Activated CD4-positive, alpha-beta memory T cell treated with anti-CD3 and anti-CD28 coated beads for 36 hours (primary cell): ENCODE measurements at regions of chr6 and their contacts with region 1.

Region 1: GRCh38 chr6:16657768-16658167 is 103.5 kb downstream of the ATXN1 start:
- DNase-seq: no peak
- H3K4me3 Mint-ChIP-seq: peak overlapping the region; percentile 60
- H3K27ac Mint-ChIP-seq: peak overlapping the region; percentile 87
- H3K4me1 Mint-ChIP-seq: peaks cover 80% of the 10 kb centered on the region
- H3K27me3 Mint-ChIP-seq: no peaks in the 10 kb centered on the region

Region 2: GRCh38 chr6:16420715-16421461 is 236.9 kb before region 1 on chr6:
- CTCF ChIA-PET with region 1: no interaction called
- POLR2A ChIA-PET with region 1: no interaction called
- intact Hi-C with region 1: loop called (anchors 2 kb)
- DNase-seq: peak; percentile 74
- H3K4me3 Mint-ChIP-seq: peak overlapping the region; percentile 62
- H3K27ac Mint-ChIP-seq: peak overlapping the region; percentile 96
- H3K4me1 Mint-ChIP-seq: peaks cover 69% of the 10 kb centered on the region
- H3K27me3 Mint-ChIP-seq: no peaks in the 10 kb centered on the region

Region 3: DNA sequence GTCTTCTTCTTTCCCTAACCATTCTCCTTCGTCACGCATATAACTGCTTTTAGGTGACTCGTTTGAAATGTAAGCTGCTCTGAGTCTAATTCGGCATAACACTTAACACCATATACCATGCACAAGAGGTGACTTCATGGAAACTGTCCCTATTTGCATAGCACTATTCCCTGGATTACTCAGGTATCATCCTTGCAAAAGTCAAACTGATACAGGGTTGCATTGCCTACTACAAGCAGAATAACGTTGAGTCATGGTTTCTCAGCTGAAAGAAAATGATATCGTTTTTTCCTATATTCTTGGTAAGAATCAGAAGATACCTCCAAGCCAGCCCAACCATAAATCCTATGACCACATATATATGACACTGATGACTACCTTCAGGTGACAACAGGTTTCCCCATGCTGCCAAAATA is 124.0 kb before region 1 on chr6:
- CTCF ChIA-PET with region 1: no interaction called
- POLR2A ChIA-PET with region 1: no interaction called
- intact Hi-C with region 1: loop called (anchors 1 kb)
- DNase-seq: no peak
- H3K4me3 Mint-ChIP-seq: no peak overlapping the region
- H3K27ac Mint-ChIP-seq: peak overlapping the region; percentile 77
- H3K4me1 Mint-ChIP-seq: peaks cover 43% of the 10 kb centered on the region
- H3K27me3 Mint-ChIP-seq: no peaks in the 10 kb centered on the region

Region 4: DNA sequence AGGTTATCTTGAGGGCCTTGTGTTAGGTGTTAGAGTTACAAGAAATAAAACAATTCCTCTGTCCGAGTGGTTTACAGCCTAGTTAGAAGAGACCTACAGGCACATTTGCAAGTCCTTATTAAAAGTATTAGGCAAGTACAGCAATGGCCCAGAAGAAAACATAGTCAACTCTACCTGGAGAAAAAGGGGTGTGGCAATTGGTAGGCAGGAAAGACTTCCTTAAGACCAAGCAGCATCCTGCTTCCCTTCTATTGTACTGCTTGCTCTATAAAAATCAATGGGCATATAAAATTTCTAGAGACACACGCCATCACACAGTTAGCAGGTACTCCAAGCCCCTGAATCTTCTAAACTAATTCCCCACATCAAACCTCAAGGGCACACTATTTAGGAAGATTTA is 82.1 kb before region 1 on chr6:
- CTCF ChIA-PET with region 1: no interaction called
- POLR2A ChIA-PET with region 1: no interaction called
- intact Hi-C with region 1: no loop called
- DNase-seq: no peak
- H3K4me3 Mint-ChIP-seq: no peak overlapping the region
- H3K27ac Mint-ChIP-seq: no peak overlapping the region
- H3K4me1 Mint-ChIP-seq: peaks cover 15% of the 10 kb centered on the region
- H3K27me3 Mint-ChIP-seq: no peaks in the 10 kb centered on the region

Region 5: GRCh38 chr6:16670183-16670582 is 12.4 kb after region 1 on chr6:
- CTCF ChIA-PET with region 1: interaction called, 3 read pairs
- POLR2A ChIA-PET with region 1: interaction called, 9 read pairs
- intact Hi-C with region 1: loop called (anchors 1 kb)
- DNase-seq: no peak
- H3K4me3 Mint-ChIP-seq: peak overlapping the region; percentile 33
- H3K27ac Mint-ChIP-seq: peak overlapping the region; percentile 87
- H3K4me1 Mint-ChIP-seq: peaks cover 81% of the 10 kb centered on the region
- H3K27me3 Mint-ChIP-seq: no peaks in the 10 kb centered on the region

Region 6: GRCh38 chr6:16698997-16699868 is 41.5 kb after region 1 on chr6:
- CTCF ChIA-PET with region 1: interaction called, 11 read pairs
- POLR2A ChIA-PET with region 1: interaction called, 37 read pairs
- intact Hi-C with region 1: loop called (anchors 1 kb)
- DNase-seq: peak; percentile 53
- H3K4me3 Mint-ChIP-seq: peak overlapping the region; percentile 78
- H3K27ac Mint-ChIP-seq: peak overlapping the region; percentile 89
- H3K4me1 Mint-ChIP-seq: peaks cover 75% of the 10 kb centered on the region
- H3K27me3 Mint-ChIP-seq: no peaks in the 10 kb centered on the region

Region 7: DNA sequence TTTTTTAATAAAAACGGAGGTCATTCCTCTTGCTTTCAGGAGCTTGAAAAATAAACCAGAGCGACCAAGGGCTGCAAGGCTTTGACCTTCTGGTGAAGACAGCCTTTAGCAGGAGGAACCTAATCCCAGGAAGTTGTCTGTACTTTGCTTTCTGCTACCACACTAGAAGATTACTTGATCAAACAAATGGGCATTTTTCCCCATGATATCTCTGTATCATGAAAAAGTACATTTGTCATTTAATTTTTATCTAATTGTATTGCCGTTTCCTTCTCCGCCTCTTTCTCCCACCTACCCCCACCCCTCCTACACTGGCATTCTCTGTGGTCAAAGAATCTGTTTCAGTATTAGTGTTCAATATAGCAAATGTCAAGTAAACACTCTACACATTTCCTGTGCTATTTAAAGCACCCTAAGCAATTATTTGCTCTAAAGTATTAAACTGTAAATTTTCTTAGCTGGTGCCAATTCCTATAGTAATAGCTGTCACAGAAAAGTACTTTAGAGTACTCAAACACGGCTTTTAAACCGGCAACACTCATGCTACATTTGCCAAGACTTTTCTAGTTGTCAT is 73.8 kb after region 1 on chr6:
- CTCF ChIA-PET with region 1: no interaction called
- POLR2A ChIA-PET with region 1: interaction called, 3 read pairs
- intact Hi-C with region 1: loop called (anchors 2 kb)
- DNase-seq: peak; percentile 62
- H3K4me3 Mint-ChIP-seq: peak overlapping the region; percentile 29
- H3K27ac Mint-ChIP-seq: peak overlapping the region; percentile 64
- H3K4me1 Mint-ChIP-seq: peaks cover 81% of the 10 kb centered on the region
- H3K27me3 Mint-ChIP-seq: no peaks in the 10 kb centered on the region